GM10248 (cell line): ENCODE measurements at regions of chr4 and their contacts with region 1.

Region 1: GRCh38 chr4:153127760-153128494 is 76.3 kb upstream of the TRIM2 start:
- DNase-seq: peak; percentile 74
- CTCF ChIP-seq: peak; percentile 83

Region 2: GRCh38 chr4:153083447-153083947 is 44.4 kb before region 1 on chr4:
- CTCF ChIA-PET with region 1: interaction called, 64 read pairs
- POLR2A ChIA-PET with region 1: no interaction called
- DNase-seq: peak; percentile 72
- CTCF ChIP-seq: peak; percentile 55

Region 3: DNA sequence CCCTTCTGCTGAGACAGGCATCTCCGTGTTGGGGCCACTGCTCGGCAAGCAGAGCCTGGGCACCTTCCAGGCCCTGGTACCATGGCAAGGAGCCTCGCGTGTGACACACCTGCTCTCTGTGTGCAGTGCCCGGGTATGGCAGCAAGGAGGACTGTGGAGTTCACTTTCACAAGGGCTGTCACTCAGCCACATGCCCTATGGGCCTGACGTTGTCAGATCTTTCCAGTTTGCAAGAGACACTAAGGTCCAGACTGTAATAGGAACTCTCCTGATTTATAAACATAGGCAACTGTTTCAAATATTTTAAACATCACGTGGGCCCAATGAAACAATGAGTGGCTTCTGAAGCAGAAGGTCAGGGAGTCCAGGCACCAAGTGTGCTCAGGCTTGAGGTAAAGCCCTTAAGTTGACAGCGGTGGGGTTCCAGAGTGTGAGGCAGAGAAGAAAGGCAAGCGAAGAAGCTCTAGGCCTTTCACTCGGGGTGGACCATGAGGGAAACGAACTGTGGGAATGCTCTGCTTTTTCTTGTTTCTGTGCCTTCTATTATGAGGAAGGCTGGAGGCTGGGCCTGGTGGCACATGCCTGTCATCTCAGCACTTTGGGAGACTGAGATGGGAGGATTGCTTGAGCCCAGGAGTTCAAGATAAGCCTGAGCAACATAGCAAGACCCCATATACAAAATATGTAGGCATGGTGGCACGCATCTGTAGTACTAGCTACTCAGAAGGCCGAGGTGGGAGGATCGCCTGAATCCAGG is 32.3 kb before region 1 on chr4:
- CTCF ChIA-PET with region 1: interaction called, 14 read pairs
- POLR2A ChIA-PET with region 1: no interaction called
- DNase-seq: no peak
- CTCF ChIP-seq: no peak

Region 4: DNA sequence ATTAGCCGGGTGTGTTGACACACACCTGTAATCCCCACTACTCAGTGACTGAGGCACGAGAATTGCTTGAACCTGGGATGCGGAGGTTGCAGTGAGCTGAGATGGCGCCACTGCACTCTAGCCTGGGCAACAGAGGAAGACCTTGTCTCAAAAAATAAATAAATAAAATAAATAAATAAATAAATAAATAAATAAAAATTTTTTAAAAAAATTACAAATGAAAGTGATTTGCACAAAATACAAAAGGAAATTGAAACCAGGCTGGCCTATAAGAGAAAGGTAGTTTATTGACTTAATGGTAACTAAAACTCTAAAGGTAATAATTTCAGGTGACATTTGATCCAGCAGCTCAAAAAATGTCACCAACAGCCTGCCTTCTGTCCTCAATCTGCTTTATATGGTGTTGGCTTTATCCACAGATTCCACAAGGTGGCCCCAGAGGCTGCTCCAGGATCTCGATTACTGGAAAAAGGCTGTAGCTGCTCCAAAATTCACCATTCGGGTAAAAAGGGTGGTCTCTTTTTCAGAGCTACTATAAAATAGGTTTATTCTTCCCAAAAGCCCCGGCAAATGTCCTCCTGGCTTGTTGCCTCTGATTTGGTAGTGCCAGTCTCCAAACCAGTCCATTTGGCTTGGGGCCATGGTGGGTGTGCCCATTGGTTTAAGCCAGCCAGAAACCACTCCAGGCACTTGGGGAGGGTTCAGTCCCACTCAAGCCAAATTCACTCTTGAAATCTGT is 14.9 kb after region 1 on chr4:
- CTCF ChIA-PET with region 1: interaction called, 38 read pairs
- POLR2A ChIA-PET with region 1: no interaction called
- DNase-seq: peak; percentile 52
- CTCF ChIP-seq: peak; percentile 59

Region 5: GRCh38 chr4:153310793-153311192 is 182.9 kb after region 1 on chr4:
- CTCF ChIA-PET with region 1: no interaction called
- POLR2A ChIA-PET with region 1: no interaction called
- DNase-seq: no peak
- CTCF ChIP-seq: no peak